OCI-LY7 (cell line): ENCODE measurements at regions of chr6 and their contacts with region 1.

Region 1: GRCh38 chr6:160137989-160138835 is 16.6 kb downstream of the SLC22A1 start:
- DNase-seq: peak; percentile 62
- H3K4me3 ChIP-seq: no peak overlapping the region
- H3K27ac ChIP-seq: no peak overlapping the region
- H3K4me1 ChIP-seq: no peaks in the 10 kb centered on the region
- CTCF ChIP-seq: peak; percentile 89

Region 2: GRCh38 chr6:160238751-160239402 is 100.7 kb after region 1 on chr6:
- CTCF ChIA-PET with region 1: no interaction called
- POLR2A ChIA-PET with region 1: no interaction called
- intact Hi-C with region 1: no loop called
- DNase-seq: no peak
- H3K4me3 ChIP-seq: no peak overlapping the region
- H3K27ac ChIP-seq: no peak overlapping the region
- H3K4me1 ChIP-seq: no peaks in the 10 kb centered on the region
- CTCF ChIP-seq: no peak

Region 3: DNA sequence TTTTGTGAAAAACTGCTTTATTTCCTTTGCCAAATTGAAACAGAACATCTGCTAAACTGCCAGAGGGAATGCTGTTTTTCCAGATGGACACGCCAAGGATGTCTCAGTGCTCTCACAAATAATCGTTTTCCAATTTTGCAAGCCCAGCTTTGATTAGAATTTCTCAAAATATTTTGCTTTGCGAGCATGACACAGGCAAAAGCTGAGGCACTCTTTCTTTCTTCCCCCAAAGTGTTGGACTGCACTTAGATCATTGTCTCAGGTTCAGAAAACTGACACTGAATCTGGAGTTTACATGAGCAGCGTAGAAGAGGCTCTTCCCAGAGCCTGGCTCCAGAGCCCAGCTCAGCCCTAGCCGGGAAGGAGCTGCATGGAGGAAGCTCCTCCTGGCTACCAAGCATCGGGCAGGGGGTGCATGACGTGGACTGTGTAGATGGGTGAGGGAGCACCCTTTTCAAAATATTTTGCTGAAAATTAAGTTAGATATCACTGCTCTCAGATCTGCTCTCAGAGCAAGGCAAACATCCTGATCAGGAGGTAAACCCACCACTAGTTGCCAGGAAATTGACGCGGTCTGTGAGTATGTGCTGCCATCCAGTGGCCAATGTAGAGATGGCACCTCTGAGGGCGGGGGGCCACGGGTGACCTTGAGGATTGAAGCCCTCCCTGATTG is 317.5 kb after region 1 on chr6:
- CTCF ChIA-PET with region 1: no interaction called
- POLR2A ChIA-PET with region 1: no interaction called
- intact Hi-C with region 1: loop called (anchors 1 kb)
- DNase-seq: peak; percentile 56
- H3K4me3 ChIP-seq: no peak overlapping the region
- H3K27ac ChIP-seq: no peak overlapping the region
- H3K4me1 ChIP-seq: no peaks in the 10 kb centered on the region
- CTCF ChIP-seq: peak; percentile 95